Caco-2 (cell line): ENCODE measurements at regions of chr15 and their contacts with region 1.

Region 1: GRCh38 chr15:73950831-73951561 is 24.7 kb downstream of the LOXL1 start:
- DNase-seq: peak; percentile 80 to 84
- H3K4me3 ChIP-seq: no peak overlapping the region
- H3K4me3 Mint-ChIP-seq: no peak overlapping the region
- H3K27ac Mint-ChIP-seq: no peak overlapping the region
- H3K4me1 ChIP-seq: no peaks in the 10 kb centered on the region
- H3K4me1 Mint-ChIP-seq: peaks cover 6% of the 10 kb centered on the region
- H3K27me3 ChIP-seq: no peaks in the 10 kb centered on the region
- H3K27me3 Mint-ChIP-seq: no peaks in the 10 kb centered on the region
- CTCF ChIP-seq: peak; percentile 59 to 86

Region 2: GRCh38 chr15:73927476-73928240 is 23.3 kb before region 1 on chr15:
- CTCF ChIA-PET with region 1: interaction called, 12 read pairs
- POLR2A ChIA-PET with region 1: no interaction called
- intact Hi-C with region 1: no loop called
- DNase-seq: peak; percentile 53 to 82
- H3K4me3 ChIP-seq: peak overlapping the region; percentile 55
- H3K4me3 Mint-ChIP-seq: peak overlapping the region; percentile 73
- H3K27ac Mint-ChIP-seq: peak overlapping the region; percentile 73
- H3K4me1 ChIP-seq: peaks cover 6% of the 10 kb centered on the region
- H3K4me1 Mint-ChIP-seq: no peaks in the 10 kb centered on the region
- H3K27me3 ChIP-seq: no peaks in the 10 kb centered on the region
- H3K27me3 Mint-ChIP-seq: peaks cover 10% of the 10 kb centered on the region
- CTCF ChIP-seq: peak; percentile 46 to 58

Region 3: GRCh38 chr15:73964736-73965093 is 13.7 kb after region 1 on chr15:
- CTCF ChIA-PET with region 1: interaction called, 24 read pairs
- POLR2A ChIA-PET with region 1: no interaction called
- intact Hi-C with region 1: loop called (anchors 1 kb)
- DNase-seq: peak; percentile 74 to 84
- H3K4me3 ChIP-seq: no peak overlapping the region
- H3K4me3 Mint-ChIP-seq: no peak overlapping the region
- H3K27ac Mint-ChIP-seq: no peak overlapping the region
- H3K4me1 ChIP-seq: no peaks in the 10 kb centered on the region
- H3K4me1 Mint-ChIP-seq: no peaks in the 10 kb centered on the region
- H3K27me3 ChIP-seq: no peaks in the 10 kb centered on the region
- H3K27me3 Mint-ChIP-seq: peaks cover 11% of the 10 kb centered on the region
- CTCF ChIP-seq: peak; percentile 83 to 95

Region 4: GRCh38 chr15:74036271-74037170 is 85.5 kb after region 1 on chr15:
- CTCF ChIA-PET with region 1: interaction called, 15 read pairs
- POLR2A ChIA-PET with region 1: no interaction called
- intact Hi-C with region 1: no loop called
- DNase-seq: peak; percentile 72 to 74
- H3K4me3 ChIP-seq: no peak overlapping the region
- H3K4me3 Mint-ChIP-seq: no peak overlapping the region
- H3K27ac Mint-ChIP-seq: no peak overlapping the region
- H3K4me1 ChIP-seq: no peaks in the 10 kb centered on the region
- H3K4me1 Mint-ChIP-seq: no peaks in the 10 kb centered on the region
- H3K27me3 ChIP-seq: no peaks in the 10 kb centered on the region
- H3K27me3 Mint-ChIP-seq: no peaks in the 10 kb centered on the region
- CTCF ChIP-seq: peak; percentile 60 to 82

Region 5: DNA sequence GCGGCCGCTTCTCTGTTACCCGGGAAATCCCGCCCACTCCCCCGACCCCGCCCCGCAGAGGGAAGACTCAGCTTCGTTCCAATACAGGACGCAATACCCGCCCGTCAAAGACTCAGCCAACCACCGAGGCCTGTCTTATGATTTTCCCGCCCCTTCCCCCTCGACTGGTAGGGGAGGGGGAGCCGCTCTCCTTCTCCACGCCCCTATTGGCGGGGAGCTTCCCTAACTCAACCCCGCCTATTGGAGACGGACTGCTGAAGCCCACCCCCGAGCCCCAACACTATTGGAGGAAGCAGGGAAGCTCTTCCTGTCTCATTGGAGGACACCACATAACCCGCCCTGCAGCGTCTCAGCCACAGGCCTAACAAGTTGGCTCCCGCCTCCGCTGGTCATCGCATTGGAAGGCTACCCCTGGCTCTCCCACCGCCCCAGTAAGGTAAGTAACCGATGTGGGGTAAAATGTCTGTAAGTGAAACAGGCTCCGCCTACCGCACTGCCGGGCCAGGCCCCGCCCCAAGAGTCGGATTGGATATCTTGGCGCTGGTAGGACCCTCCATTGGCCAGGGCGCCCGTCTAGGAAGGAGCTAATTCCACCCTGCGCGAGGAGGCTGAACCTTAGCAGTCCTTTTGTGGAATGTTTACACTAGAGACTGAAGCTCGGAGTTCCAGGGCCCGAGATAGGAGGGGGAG is 1500.8 kb after region 1 on chr15 and contains the start of gene SIN3A:
- CTCF ChIA-PET with region 1: no interaction called
- POLR2A ChIA-PET with region 1: no interaction called
- intact Hi-C with region 1: no loop called
- DNase-seq: peak; percentile 98 to 100
- H3K4me3 ChIP-seq: peak within 1 kb of the TSS; percentile 99
- H3K4me3 Mint-ChIP-seq: peak within 1 kb of the TSS; percentile 74
- H3K27ac Mint-ChIP-seq: peak within 1 kb of the TSS; percentile 89
- H3K4me1 ChIP-seq: peaks cover 12% of the 10 kb centered on the region; the same call in 1 of the 2 replicates
- H3K4me1 Mint-ChIP-seq: peaks cover 9% of the 10 kb centered on the region
- H3K27me3 ChIP-seq: no peaks in the 10 kb centered on the region
- H3K27me3 Mint-ChIP-seq: no peaks in the 10 kb centered on the region
- CTCF ChIP-seq: no peak
- total RNA-seq, gene SIN3A: 64.4 and 67.1 TPM in 2 replicates